ENCODE measurements at regions of chr20 and their contacts with region 1.

Region 1: GRCh38 chr20:32902456-32903420 is 44.0 kb downstream of the EFCAB8 start:
- DNase-seq: peak; percentile 75
- ATAC-seq: peak; percentile 76
- H3K4me3 ChIP-seq: no peak overlapping the region
- H3K4me3 Mint-ChIP-seq: no peak overlapping the region
- H3K27ac ChIP-seq: no peak overlapping the region
- H3K27ac Mint-ChIP-seq: no peak overlapping the region
- H3K4me1 ChIP-seq: peaks cover 0 to 4% of the 10 kb centered on the region in 2 donors
- H3K4me1 Mint-ChIP-seq: peaks cover 2% of the 10 kb centered on the region
- H3K27me3 ChIP-seq: no peaks in the 10 kb centered on the region
- H3K27me3 Mint-ChIP-seq: no peaks in the 10 kb centered on the region
- CTCF ChIP-seq: peak; percentile 99

Region 2: DNA sequence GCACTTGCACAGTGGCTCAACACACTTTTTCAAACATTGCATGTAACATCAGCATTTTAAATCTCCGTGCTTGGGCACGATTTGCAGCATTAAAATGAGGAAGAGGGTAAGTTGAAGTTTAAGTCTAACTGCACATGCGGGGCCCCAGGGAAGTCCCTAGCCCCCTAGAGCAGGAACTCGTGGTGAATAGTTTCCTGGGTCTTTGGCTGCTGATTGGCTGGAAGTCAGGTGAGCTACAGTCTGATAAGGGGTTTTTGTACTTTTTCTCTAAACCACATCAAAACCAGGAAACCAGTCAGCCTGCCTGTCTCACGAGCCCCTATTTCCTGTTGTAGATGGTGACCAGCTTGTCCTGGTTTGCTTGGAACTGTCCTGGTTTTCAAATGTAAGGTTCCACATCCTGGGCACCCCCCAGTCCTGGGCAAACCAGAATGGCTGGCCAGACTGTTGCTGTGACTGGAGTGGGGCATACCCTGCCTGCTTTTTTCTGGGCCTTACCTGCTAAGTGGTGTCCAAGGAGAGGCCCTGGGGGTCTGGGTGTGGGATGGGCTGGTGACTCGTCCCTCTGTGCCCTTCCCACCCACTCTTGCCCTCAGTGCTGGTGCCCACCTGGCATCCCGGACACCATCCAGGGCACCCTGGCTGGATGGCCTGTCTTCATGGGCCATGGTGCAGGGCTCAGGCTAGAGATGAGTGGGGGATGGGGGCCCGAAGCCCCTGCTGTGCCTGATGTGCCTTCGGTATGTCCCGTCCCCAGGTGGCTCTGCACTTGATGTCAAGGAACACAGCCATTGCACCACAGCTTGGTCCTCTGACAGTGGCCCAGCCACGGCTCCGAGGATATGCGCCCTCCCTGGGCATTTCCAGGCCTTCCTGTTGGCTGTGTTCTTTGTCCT is 69.7 kb after region 1 on chr20:
- CTCF ChIA-PET with region 1: interaction called, 11 read pairs
- POLR2A ChIA-PET with region 1: no interaction called
- intact Hi-C with region 1: no loop called
- DNase-seq: peak; percentile 94
- ATAC-seq: peak; percentile 92
- H3K4me3 ChIP-seq: peak overlapping the region in 4 of 5 experiments; percentile 9 to 47 (median 20)
- H3K4me3 Mint-ChIP-seq: no peak overlapping the region
- H3K27ac ChIP-seq: peak overlapping the region; percentile 99
- H3K27ac Mint-ChIP-seq: no peak overlapping the region
- H3K4me1 ChIP-seq: peaks cover 44 to 61% of the 10 kb centered on the region in 2 donors
- H3K4me1 Mint-ChIP-seq: peaks cover 19% of the 10 kb centered on the region
- H3K27me3 ChIP-seq: no peaks in the 10 kb centered on the region
- H3K27me3 Mint-ChIP-seq: no peaks in the 10 kb centered on the region
- CTCF ChIP-seq: no peak

Region 3: DNA sequence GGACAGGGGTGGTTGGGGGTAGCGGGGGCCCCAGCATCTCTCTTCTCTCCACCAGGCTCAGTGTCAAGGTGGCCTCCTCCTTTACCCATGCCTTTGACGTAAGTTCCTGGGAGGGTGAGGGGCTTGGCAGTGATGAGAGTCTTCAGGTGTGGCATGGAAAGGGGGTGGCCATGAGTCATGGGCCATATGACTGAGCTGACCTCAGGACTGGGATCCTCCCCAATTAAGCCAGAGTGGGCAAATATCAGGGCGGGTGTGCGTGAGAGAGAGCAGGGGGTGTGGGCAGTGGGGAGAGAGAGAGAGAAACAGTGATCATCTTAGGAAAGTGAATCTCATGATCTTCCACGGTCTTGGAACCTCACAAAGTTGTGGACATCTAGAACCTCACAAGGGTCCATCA is 168.5 kb after region 1 on chr20:
- CTCF ChIA-PET with region 1: interaction called, 11 read pairs
- POLR2A ChIA-PET with region 1: no interaction called
- intact Hi-C with region 1: loop called (anchors 1 kb)
- DNase-seq: no peak
- ATAC-seq: no peak
- H3K4me3 ChIP-seq: no peak overlapping the region
- H3K4me3 Mint-ChIP-seq: no peak overlapping the region
- H3K27ac ChIP-seq: no peak overlapping the region
- H3K27ac Mint-ChIP-seq: no peak overlapping the region
- H3K4me1 ChIP-seq: no peaks in the 10 kb centered on the region
- H3K4me1 Mint-ChIP-seq: no peaks in the 10 kb centered on the region
- H3K27me3 ChIP-seq: no peaks in the 10 kb centered on the region
- H3K27me3 Mint-ChIP-seq: peaks cover 7% of the 10 kb centered on the region
- CTCF ChIP-seq: no peak

Region 4: GRCh38 chr20:33097001-33097400 is 194.3 kb after region 1 on chr20:
- CTCF ChIA-PET with region 1: interaction called, 25 read pairs
- POLR2A ChIA-PET with region 1: no interaction called
- intact Hi-C with region 1: no loop called
- DNase-seq: no peak
- ATAC-seq: no peak
- H3K4me3 ChIP-seq: no peak overlapping the region
- H3K4me3 Mint-ChIP-seq: no peak overlapping the region
- H3K27ac ChIP-seq: no peak overlapping the region
- H3K27ac Mint-ChIP-seq: no peak overlapping the region
- H3K4me1 ChIP-seq: no peaks in the 10 kb centered on the region
- H3K4me1 Mint-ChIP-seq: no peaks in the 10 kb centered on the region
- H3K27me3 ChIP-seq: no peaks in the 10 kb centered on the region
- H3K27me3 Mint-ChIP-seq: peaks cover 14% of the 10 kb centered on the region
- CTCF ChIP-seq: no peak

Region 5: GRCh38 chr20:33299111-33299603 is 396.4 kb after region 1 on chr20:
- CTCF ChIA-PET with region 1: interaction called, 18 read pairs
- POLR2A ChIA-PET with region 1: no interaction called
- intact Hi-C with region 1: loop called (anchors 1 kb)
- DNase-seq: peak; percentile 78
- ATAC-seq: peak; percentile 76
- H3K4me3 ChIP-seq: no peak overlapping the region
- H3K4me3 Mint-ChIP-seq: no peak overlapping the region
- H3K27ac ChIP-seq: no peak overlapping the region
- H3K27ac Mint-ChIP-seq: no peak overlapping the region
- H3K4me1 ChIP-seq: peaks cover 0 to 6% of the 10 kb centered on the region in 2 donors
- H3K4me1 Mint-ChIP-seq: no peaks in the 10 kb centered on the region
- H3K27me3 ChIP-seq: peaks cover 0 to 17% (median 0%) of the 10 kb centered on the region in 4 experiments
- H3K27me3 Mint-ChIP-seq: peaks cover 20% of the 10 kb centered on the region
- CTCF ChIP-seq: peak; percentile 97